Stomach (tissue), 19 donors: ENCODE measurements at regions of chr18 and their contacts with region 1.

Region 1: GRCh38 chr18:21612125-21612991 is at the start of gene SNRPD1:
- DNase-seq: peak; percentile 90 to 97
- H3K4me3 ChIP-seq: peak within 1 kb of the TSS; percentile 70 to 97 (median 84)
- H3K27ac ChIP-seq: peak within 1 kb of the TSS; percentile 63 to 93 (median 87)
- H3K4me1 ChIP-seq: peaks cover 8 to 36% (median 23%) of the 10 kb centered on the region in 4 donors
- H3K27me3 ChIP-seq: no peaks in the 10 kb centered on the region
- CTCF ChIP-seq: peak in 5 of 7 experiments; percentile 87 to 95 (median 91)
- EP300 ChIP-seq: no peak
- POLR2A ChIP-seq: no peak
- total RNA-seq, gene SNRPD1: 0.45 to 19.8 (median 5.8) TPM

Region 2: GRCh38 chr18:21341141-21341540 is 271.2 kb before region 1 on chr18:
- intact Hi-C with region 1: no loop called
- DNase-seq: no peak
- H3K4me3 ChIP-seq: no peak overlapping the region
- H3K27ac ChIP-seq: no peak overlapping the region
- H3K4me1 ChIP-seq: no peaks in the 10 kb centered on the region
- H3K27me3 ChIP-seq: no peaks in the 10 kb centered on the region
- CTCF ChIP-seq: no peak
- EP300 ChIP-seq: no peak
- POLR2A ChIP-seq: no peak

Region 3: GRCh38 chr18:21740724-21741510 is 128.6 kb after region 1 on chr18 and contains the start of gene MIB1:
- intact Hi-C with region 1: loop called (anchors 10 kb)
- DNase-seq: peak; percentile 99 to 100
- H3K4me3 ChIP-seq: peak within 1 kb of the TSS; percentile 78 to 98 (median 92)
- H3K27ac ChIP-seq: peak within 1 kb of the TSS; percentile 94 to 99 (median 98)
- H3K4me1 ChIP-seq: peaks cover 0 to 47% (median 29%) of the 10 kb centered on the region in 4 donors
- H3K27me3 ChIP-seq: no peaks in the 10 kb centered on the region
- CTCF ChIP-seq: peak in 1 of 7 experiments; percentile 3
- EP300 ChIP-seq: no peak
- POLR2A ChIP-seq: peak in 1 of 4 donors; percentile 68
- total RNA-seq, gene MIB1: 10.4 to 83.5 (median 18.7) TPM

Region 4: DNA sequence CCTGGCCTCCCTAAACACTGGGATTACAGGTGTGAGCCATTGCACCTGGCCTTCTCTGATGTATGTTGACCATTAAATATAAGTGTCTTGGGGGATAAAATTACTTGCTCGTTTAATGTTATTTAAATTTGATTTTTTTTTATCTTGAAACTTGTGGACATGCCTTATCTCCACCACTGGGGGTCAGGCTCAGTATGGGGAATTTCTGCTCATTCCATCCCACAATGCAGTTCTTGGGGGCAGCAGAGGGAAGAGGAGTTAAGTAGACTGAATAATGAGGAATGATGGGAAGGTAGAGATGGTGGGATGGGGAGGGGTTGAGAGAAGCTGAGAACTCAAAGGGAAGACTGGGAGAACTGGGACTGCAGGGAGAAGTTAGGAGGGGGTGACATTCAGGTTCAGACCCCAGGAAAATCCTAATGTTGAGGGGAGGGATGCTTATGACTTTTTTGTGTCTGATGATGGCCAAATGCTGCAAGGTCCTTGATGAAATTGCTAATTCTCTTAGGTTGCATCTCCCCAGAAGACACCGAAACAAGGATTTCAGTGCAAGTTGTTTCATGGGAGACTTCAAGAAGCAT is 302.5 kb after region 1 on chr18:
- intact Hi-C with region 1: no loop called
- DNase-seq: peak in 1 of 2 donors; percentile 84
- H3K4me3 ChIP-seq: no peak overlapping the region
- H3K27ac ChIP-seq: no peak overlapping the region
- H3K4me1 ChIP-seq: peaks cover 0 to 12% (median 3%) of the 10 kb centered on the region in 4 donors
- H3K27me3 ChIP-seq: no peaks in the 10 kb centered on the region
- CTCF ChIP-seq: peak in 5 of 7 experiments; percentile 21 to 68 (median 48)
- EP300 ChIP-seq: no peak
- POLR2A ChIP-seq: no peak